HCT116 (cell line): ENCODE measurements at regions of chr19 and their contacts with region 1.

Region 1: DNA sequence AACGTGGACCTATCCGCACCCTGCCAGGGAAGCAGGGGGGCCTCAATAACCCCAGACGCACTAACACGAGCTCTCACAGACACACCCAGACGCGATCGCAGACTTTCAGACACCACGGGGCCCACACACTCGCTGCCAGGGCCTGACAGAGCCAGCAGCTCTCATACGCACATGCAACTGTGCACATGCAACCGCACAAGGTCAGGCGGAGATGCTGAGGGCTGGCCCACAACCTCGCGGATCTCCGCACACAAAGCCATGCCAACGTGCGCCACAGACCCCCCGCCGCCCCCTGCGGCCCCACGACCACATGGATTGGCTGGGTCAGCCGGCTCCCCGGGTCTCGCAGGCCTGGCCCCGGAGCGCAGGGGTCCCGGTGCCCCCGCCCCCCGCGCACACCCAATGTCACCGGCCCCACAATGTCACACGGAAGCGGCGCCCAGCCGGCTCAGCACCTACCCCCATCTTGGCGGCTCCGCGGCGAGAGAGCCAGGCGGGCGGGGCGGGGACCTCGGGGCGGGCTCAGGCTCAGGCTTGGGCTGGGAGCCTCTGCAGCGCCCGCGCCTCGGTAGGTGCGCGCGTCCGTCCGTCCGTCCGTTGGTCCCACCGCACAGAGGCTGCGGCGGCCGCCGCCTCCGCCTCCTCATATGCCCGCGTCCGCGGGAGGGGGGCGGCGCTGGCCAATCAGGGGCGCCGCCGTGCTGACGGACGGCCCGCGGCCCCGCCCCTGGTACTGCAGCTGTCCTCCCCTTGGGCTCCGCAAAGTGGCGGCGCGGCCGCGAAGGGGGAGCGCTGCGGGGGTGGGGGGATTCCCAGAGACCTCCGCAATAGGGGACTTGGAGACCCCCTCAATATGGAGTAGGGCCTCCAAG is at the start of gene ATP1A3:
- DNase-seq: peak; percentile 31
- ATAC-seq: peak; percentile 87
- H3K4me3 ChIP-seq: peak within 1 kb of the TSS; percentile 66 to 76
- H3K27ac ChIP-seq: peak within 1 kb of the TSS; percentile 35; the same call in 1 of the 2 replicates
- H3K4me1 ChIP-seq: peaks cover 4 to 21% of the 10 kb centered on the region in 2 experiments; a peak in 3 of 4 replicates
- H3K27me3 ChIP-seq: peaks cover 7% of the 10 kb centered on the region; the same call in 1 of the 2 replicates
- CTCF ChIP-seq: no peak
- POLR2A ChIP-seq: no peak
- RAD21 ChIP-seq: no peak
- total RNA-seq, gene ATP1A3: 34.7 TPM

Region 2: DNA sequence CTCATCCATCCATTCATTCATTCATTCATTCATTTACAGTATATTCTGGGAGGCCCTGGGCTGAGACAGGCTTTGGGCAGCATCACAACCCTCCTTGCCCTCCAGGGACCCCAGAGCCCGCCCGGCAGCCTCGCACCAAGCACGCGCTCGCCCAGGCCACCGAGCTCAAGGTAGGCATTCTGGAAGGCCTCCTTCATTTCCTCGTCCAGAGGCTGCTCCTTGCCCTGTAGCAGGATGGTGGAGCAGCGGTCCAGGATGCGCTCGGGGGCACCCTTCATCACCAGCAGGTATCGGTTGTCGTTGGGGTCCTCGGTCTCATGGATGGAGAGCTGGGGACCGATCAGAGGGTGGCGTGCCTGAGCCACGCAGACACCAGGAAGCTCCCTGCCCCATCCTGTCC is 15.4 kb before region 1 on chr19:
- CTCF ChIA-PET with region 1: no interaction called
- POLR2A ChIA-PET with region 1: no interaction called
- RAD21 ChIA-PET with region 1: no interaction called
- intact Hi-C with region 1: no loop called
- DNase-seq: no peak
- ATAC-seq: no peak
- H3K4me3 ChIP-seq: no peak overlapping the region
- H3K27ac ChIP-seq: no peak overlapping the region
- H3K4me1 ChIP-seq: no peaks in the 10 kb centered on the region
- H3K27me3 ChIP-seq: no peaks in the 10 kb centered on the region
- CTCF ChIP-seq: no peak
- POLR2A ChIP-seq: no peak
- RAD21 ChIP-seq: no peak

Region 3: GRCh38 chr19:42023121-42023942 is 29.5 kb after region 1 on chr19:
- CTCF ChIA-PET with region 1: interaction called, 6 read pairs
- POLR2A ChIA-PET with region 1: no interaction called
- RAD21 ChIA-PET with region 1: no interaction called
- intact Hi-C with region 1: loop called (anchors 1 kb)
- DNase-seq: peak; percentile 28
- ATAC-seq: peak; percentile 88
- H3K4me3 ChIP-seq: no peak overlapping the region
- H3K27ac ChIP-seq: no peak overlapping the region; the same call in 1 of the 2 replicates
- H3K4me1 ChIP-seq: peaks cover 0 to 12% of the 10 kb centered on the region in 2 experiments; a peak in 2 of 4 replicates
- H3K27me3 ChIP-seq: 0 out of 2 replicates have a peak, but pooled peaks cover 4% of the 10 kb centered on the region
- CTCF ChIP-seq: peak; percentile 55 to 79 (median 77); a peak in 5 of 6 replicates
- POLR2A ChIP-seq: no peak
- RAD21 ChIP-seq: peak; percentile 54

Region 4: GRCh38 chr19:42092350-42092749 is 98.5 kb after region 1 on chr19:
- CTCF ChIA-PET with region 1: no interaction called
- POLR2A ChIA-PET with region 1: no interaction called
- RAD21 ChIA-PET with region 1: no interaction called
- intact Hi-C with region 1: loop called (anchors 10 kb)
- DNase-seq: no peak
- ATAC-seq: peak; percentile 86
- H3K4me3 ChIP-seq: no peak overlapping the region
- H3K27ac ChIP-seq: no peak overlapping the region
- H3K4me1 ChIP-seq: peaks cover 0 to 30% of the 10 kb centered on the region in 2 experiments; a peak in 2 of 4 replicates
- H3K27me3 ChIP-seq: no peaks in the 10 kb centered on the region
- CTCF ChIP-seq: peak; percentile 67 to 86 (median 84); a peak in 5 of 6 replicates
- POLR2A ChIP-seq: no peak
- RAD21 ChIP-seq: peak; percentile 78